ENCODE measurements at regions of chr11 and their contacts with region 1.

Region 1: DNA sequence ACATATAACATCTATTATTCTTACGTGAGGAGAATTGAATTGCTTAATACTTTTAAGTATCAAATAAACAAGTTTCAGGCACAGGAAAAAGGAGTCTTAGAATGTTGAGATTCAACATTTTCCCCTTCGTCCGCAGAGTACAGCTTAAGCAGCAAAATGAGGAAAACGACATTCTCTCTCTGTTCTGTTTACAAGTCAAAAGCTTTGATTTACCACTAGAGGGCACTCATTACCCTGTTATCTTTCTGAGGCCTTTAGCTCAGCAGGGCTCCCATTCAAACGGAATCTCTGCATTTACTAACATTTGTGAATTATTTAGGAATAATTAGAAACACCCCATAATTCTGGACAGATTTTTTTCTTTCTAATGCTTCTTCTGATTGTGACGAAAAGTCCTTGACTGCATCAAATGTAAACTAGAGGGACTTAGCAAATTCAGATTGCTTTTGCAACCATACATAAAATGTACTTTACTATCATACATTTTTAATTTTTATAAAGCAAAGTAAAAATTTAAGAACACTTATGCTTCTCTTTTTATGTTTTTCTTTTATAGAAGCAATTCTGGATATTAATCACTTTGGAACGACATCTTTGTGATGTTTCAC is 75.0 kb downstream of the JRKL start:
- DNase-seq: no peak

Region 2: DNA sequence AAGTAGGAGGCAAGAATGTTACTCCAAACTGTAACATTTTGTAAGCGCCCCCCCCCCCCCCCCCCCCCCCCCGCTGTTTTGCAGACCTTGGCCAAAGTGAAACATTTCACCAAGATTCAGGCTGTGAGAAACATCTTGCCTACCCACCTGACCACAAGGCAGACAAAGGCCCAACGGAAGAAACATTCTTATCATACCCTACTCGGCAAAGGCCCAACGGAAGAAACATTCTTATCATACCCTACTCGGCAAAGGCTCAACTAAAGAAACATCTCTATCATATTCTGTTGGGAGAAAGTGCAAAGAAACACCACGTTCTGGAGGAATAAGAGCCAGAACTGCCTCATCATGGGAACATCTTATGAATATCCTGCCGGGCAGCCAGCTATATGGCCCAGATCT is 42.1 kb after region 1 on chr11:
- intact Hi-C with region 1: no loop called
- DNase-seq: no peak

Region 3: DNA sequence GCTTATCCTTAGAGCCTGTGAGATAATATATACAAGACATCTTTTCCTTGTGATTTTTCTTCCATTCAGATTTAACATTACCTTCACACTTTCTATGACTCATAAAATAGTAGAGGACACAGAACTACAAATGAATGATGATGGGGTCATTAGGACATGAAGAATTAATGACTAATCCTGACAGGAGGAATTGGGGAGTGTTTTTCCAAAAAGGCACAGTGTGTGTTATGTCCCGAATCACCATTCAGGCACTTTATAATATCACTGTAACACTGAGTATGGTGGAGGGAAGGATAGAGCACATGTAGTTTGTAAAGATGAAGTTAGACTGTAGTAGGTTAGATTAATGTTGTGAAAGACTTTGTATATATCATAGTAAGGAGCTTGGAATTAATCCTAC is 316.3 kb after region 1 on chr11:
- intact Hi-C with region 1: loop called (anchors 10 kb)
- DNase-seq: no peak